ENCODE measurements at regions of chr9 and their contacts with region 1.

Region 1: GRCh38 chr9:38724754-38725153 is 4.8 kb upstream of the FAM240B start:
- DNase-seq: no peak

Region 2: GRCh38 chr9:38088006-38088925 is 636.5 kb before region 1 on chr9:
- intact Hi-C with region 1: no loop called
- DNase-seq: peak; percentile 94

Region 3: GRCh38 chr9:38694676-38695075 is 30.1 kb before region 1 on chr9:
- intact Hi-C with region 1: loop called in 1 of 2 experiments (anchors 2 kb)
- DNase-seq: no peak